ENCODE measurements at regions of chr12 and their contacts with region 1.

Region 1: DNA sequence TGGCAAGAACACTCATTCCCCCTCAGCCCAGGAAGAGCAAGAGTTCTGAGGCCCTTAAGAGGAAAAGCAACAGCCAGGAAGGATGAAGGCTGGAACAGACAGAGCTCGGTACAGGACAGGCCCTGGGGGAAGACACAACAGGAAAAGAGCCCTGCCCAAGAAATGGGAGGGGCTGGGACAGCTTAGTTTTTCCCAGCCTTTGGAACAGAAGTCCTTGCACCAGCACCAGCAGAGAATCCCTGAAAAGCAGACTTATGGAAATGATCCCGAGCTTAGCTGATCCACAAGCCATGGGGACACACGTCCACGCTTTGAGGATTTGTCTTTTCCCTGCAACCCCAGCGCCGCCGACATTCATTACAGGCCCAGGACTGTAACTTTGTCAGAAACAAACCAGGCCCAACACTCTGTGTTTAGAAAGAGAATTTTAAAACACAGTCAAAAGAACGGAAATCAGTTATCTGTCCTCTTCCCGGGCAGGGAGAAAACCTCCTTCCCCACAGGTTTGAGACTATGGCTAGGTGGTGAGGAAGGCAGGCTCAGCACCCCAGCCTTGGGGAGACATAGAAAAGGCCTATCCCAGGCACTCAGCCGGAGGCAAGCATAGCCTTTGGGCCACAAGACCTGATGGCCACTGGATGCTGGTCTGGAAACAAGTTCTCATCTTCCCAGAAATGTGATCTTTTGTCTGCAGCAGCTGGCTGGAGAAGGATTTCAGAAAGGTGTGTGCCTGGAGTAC is 4.0 kb upstream of the AVIL start:
- DNase-seq: no peak
- H3K4me3 ChIP-seq: no peak overlapping the region
- CTCF ChIP-seq: no peak

Region 2: GRCh38 chr12:57836442-57837375 is 14.1 kb after region 1 on chr12:
- CTCF ChIA-PET with region 1: interaction called, 12 read pairs
- POLR2A ChIA-PET with region 1: interaction called, 3 read pairs
- DNase-seq: peak; percentile 60
- H3K4me3 ChIP-seq: peak overlapping the region; percentile 40
- CTCF ChIP-seq: no peak